HepG2 (cell line): ENCODE measurements at regions of chr9 and their contacts with region 1.

Region 1: GRCh38 chr9:8133606-8134005 is 334.0 kb upstream of the DMAC1 start:
- DNase-seq: no peak
- ATAC-seq: no peak
- H3K4me3 ChIP-seq: no peak overlapping the region
- H3K27ac ChIP-seq: no peak overlapping the region
- H3K4me1 ChIP-seq: no peaks in the 10 kb centered on the region
- H3K27me3 ChIP-seq: no peaks in the 10 kb centered on the region
- CTCF ChIP-seq: no peak
- EP300 ChIP-seq: no peak
- POLR2A ChIP-seq: no peak
- RAD21 ChIP-seq: no peak

Region 2: DNA sequence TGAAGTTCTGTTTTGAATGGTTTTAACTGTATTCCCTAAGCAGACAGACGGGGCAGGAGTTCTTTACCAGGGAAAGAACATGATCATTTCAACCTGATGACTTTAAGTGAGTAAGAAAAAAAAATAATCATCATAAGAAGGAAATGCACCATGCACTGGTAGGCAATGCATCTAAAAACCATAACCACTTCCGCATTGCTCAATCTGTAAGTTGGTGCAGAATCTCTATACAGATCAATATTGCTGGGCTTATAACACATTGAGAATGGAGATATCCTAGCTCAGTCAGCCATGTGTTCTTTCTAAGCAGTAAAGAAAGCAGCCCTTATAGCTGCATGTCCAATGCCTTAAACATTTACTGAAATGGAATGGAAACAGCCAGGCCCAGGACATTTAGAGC is 73.1 kb after region 1 on chr9:
- CTCF ChIA-PET with region 1: no interaction called
- POLR2A ChIA-PET with region 1: no interaction called
- in situ Hi-C with region 1: no loop called
- intact Hi-C with region 1: no loop called
- DNase-seq: no peak
- ATAC-seq: no peak
- H3K4me3 ChIP-seq: no peak overlapping the region
- H3K27ac ChIP-seq: no peak overlapping the region
- H3K4me1 ChIP-seq: no peaks in the 10 kb centered on the region
- H3K27me3 ChIP-seq: no peaks in the 10 kb centered on the region
- CTCF ChIP-seq: no peak
- EP300 ChIP-seq: no peak
- POLR2A ChIP-seq: no peak
- RAD21 ChIP-seq: no peak

Region 3: DNA sequence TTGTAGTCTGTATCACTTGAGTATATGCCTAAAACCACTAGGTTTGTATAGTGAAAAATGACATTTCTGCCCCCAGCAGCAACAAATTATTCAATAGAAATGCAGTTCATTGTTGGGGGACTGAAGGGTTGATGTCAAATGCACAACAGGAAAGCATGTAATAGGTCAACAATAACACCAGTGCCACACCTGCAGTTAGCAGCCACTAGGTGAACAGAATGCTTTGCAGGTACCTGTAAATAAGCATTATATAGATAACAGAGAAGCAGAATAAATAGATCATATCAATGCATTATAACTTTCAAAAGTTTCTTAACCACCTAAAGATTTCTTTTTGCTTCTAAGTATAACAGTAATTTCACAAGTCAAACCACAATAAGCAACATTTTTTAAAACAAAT is 101.9 kb after region 1 on chr9:
- CTCF ChIA-PET with region 1: no interaction called
- POLR2A ChIA-PET with region 1: no interaction called
- in situ Hi-C with region 1: no loop called
- intact Hi-C with region 1: loop called (anchors 5 kb)
- DNase-seq: no peak
- ATAC-seq: no peak
- H3K4me3 ChIP-seq: no peak overlapping the region
- H3K27ac ChIP-seq: no peak overlapping the region
- H3K4me1 ChIP-seq: no peaks in the 10 kb centered on the region
- H3K27me3 ChIP-seq: no peaks in the 10 kb centered on the region
- CTCF ChIP-seq: no peak
- EP300 ChIP-seq: no peak
- POLR2A ChIP-seq: no peak
- RAD21 ChIP-seq: no peak